ENCODE measurements at regions of chr6 and their contacts with region 1.

Region 1: DNA sequence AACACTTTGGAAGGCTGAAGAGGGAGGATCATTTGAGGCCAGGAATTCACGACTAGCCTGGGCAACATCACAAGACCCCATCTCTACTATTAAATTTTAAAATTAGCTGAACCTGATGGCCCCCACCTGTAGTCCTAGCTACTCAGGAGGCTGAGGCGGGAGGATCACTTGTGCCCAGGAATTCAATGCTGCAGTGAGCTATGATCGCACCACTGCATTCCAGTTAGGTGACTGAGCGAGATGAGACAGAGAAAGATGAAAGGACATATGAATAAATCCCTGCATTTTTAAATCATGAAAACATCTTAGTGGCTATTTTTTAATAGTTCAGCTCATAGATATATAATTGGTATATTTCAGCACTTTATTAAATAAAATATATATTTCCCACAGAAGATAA is 93.8 kb downstream of the GPR63 start:
- DNase-seq: peak; percentile 7
- ATAC-seq: peak; percentile 71
- H3K4me3 ChIP-seq: no peak overlapping the region
- H3K27ac ChIP-seq: no peak overlapping the region
- H3K4me1 ChIP-seq: peaks cover 4 to 10% of the 10 kb centered on the region in 2 experiments; a peak in 3 of 4 replicates
- H3K27me3 ChIP-seq: no peaks in the 10 kb centered on the region
- CTCF ChIP-seq: no peak
- POLR2A ChIP-seq: no peak
- RAD21 ChIP-seq: no peak

Region 2: GRCh38 chr6:96756846-96757530 is 13.5 kb after region 1 on chr6:
- CTCF ChIA-PET with region 1: no interaction called
- POLR2A ChIA-PET with region 1: no interaction called
- RAD21 ChIA-PET with region 1: no interaction called
- intact Hi-C with region 1: loop called (anchors 1 kb)
- DNase-seq: no peak
- ATAC-seq: no peak
- H3K4me3 ChIP-seq: no peak overlapping the region
- H3K27ac ChIP-seq: no peak overlapping the region
- H3K4me1 ChIP-seq: no peaks in the 10 kb centered on the region
- H3K27me3 ChIP-seq: no peaks in the 10 kb centered on the region
- CTCF ChIP-seq: no peak
- POLR2A ChIP-seq: no peak
- RAD21 ChIP-seq: no peak

Region 3: GRCh38 chr6:97023982-97024381 is 280.5 kb after region 1 on chr6:
- CTCF ChIA-PET with region 1: no interaction called
- POLR2A ChIA-PET with region 1: no interaction called
- RAD21 ChIA-PET with region 1: no interaction called
- intact Hi-C with region 1: no loop called
- DNase-seq: no peak
- ATAC-seq: no peak
- H3K4me3 ChIP-seq: no peak overlapping the region
- H3K27ac ChIP-seq: no peak overlapping the region
- H3K4me1 ChIP-seq: no peaks in the 10 kb centered on the region
- H3K27me3 ChIP-seq: no peaks in the 10 kb centered on the region
- CTCF ChIP-seq: no peak
- POLR2A ChIP-seq: no peak
- RAD21 ChIP-seq: no peak

Region 4: GRCh38 chr6:97473979-97474378 is 730.5 kb after region 1 on chr6:
- CTCF ChIA-PET with region 1: no interaction called
- POLR2A ChIA-PET with region 1: no interaction called
- RAD21 ChIA-PET with region 1: no interaction called
- intact Hi-C with region 1: no loop called
- DNase-seq: no peak
- ATAC-seq: peak; percentile 63
- H3K4me3 ChIP-seq: no peak overlapping the region
- H3K27ac ChIP-seq: no peak overlapping the region
- H3K4me1 ChIP-seq: no peaks in the 10 kb centered on the region
- H3K27me3 ChIP-seq: no peaks in the 10 kb centered on the region; the same call in 1 of the 2 replicates
- CTCF ChIP-seq: peak; percentile 13 to 51 (median 30); a peak in 4 of 6 replicates
- POLR2A ChIP-seq: no peak
- RAD21 ChIP-seq: no peak; the same call in 1 of the 2 replicates